Right ventricle myocardium inferior (tissue), 1 donor: ENCODE measurements at regions of chr5 and their contacts with region 1.

Region 1: GRCh38 chr5:180347702-180348101 is 5.4 kb downstream of the GFPT2 start:
- DNase-seq: peak; percentile 51
- ATAC-seq: no peak

Region 2: GRCh38 chr5:180084688-180085561 is 262.8 kb before region 1 on chr5:
- intact Hi-C with region 1: no loop called
- DNase-seq: no peak
- ATAC-seq: peak; percentile 43

Region 3: GRCh38 chr5:180366326-180366725 is 18.6 kb after region 1 on chr5:
- intact Hi-C with region 1: loop called (anchors 1 kb)
- DNase-seq: peak; percentile 68
- ATAC-seq: no peak